ENCODE measurements at regions of chr14 and their contacts with region 1.

Region 1: DNA sequence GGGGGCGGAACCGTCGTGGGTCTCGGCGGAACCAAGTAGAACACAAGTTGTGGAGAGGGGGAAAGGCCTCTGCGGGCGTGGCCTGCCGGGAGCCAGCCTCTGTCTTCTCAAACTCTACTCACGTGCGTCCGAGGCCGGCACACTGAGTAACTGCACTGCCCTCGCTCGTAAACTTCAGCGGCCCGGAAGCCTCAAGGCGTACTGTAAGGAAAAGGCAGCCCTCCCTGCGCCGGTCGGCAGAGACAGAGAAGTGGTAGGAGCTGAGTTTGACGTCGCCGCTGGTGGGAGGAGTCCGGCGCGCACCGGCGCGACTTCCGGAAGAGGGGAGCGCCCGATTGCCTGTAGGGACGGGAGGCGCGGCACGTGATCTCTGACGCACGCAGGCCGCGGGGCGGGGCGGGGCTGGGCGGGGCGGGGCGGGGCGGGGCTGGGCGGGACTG is at the start of gene FBXO33:
- DNase-seq: peak; percentile 96
- H3K4me3 ChIP-seq: peak within 1 kb of the TSS; percentile 90
- H3K27ac ChIP-seq: peak within 1 kb of the TSS; percentile 91
- H3K4me1 ChIP-seq: peaks cover 33% of the 10 kb centered on the region
- CTCF ChIP-seq: no peak
- total RNA-seq, gene FBXO33: 14.2 and 19.8 TPM in 2 replicates

Region 2: GRCh38 chr14:39232554-39233415 is 199.4 kb before region 1 on chr14:
- CTCF ChIA-PET with region 1: no interaction called
- POLR2A ChIA-PET with region 1: interaction called, 3 read pairs
- intact Hi-C with region 1: loop called (anchors 5 kb)
- DNase-seq: no peak
- H3K4me3 ChIP-seq: no peak overlapping the region
- H3K27ac ChIP-seq: no peak overlapping the region
- H3K4me1 ChIP-seq: no peaks in the 10 kb centered on the region
- CTCF ChIP-seq: 0 out of 2 replicates have a peak, but pooled peaks have one; percentile 22

Region 3: GRCh38 chr14:39266871-39267591 is 165.2 kb before region 1 on chr14:
- CTCF ChIA-PET with region 1: interaction called, 4 read pairs
- POLR2A ChIA-PET with region 1: interaction called, 35 read pairs
- intact Hi-C with region 1: loop called (anchors 1 kb)
- DNase-seq: peak; percentile 95
- H3K4me3 ChIP-seq: peak overlapping the region; percentile 88
- H3K27ac ChIP-seq: peak overlapping the region; percentile 84
- H3K4me1 ChIP-seq: peaks cover 29% of the 10 kb centered on the region
- CTCF ChIP-seq: no peak